ENCODE measurements at regions of chr20 and their contacts with region 1.

Region 1: DNA sequence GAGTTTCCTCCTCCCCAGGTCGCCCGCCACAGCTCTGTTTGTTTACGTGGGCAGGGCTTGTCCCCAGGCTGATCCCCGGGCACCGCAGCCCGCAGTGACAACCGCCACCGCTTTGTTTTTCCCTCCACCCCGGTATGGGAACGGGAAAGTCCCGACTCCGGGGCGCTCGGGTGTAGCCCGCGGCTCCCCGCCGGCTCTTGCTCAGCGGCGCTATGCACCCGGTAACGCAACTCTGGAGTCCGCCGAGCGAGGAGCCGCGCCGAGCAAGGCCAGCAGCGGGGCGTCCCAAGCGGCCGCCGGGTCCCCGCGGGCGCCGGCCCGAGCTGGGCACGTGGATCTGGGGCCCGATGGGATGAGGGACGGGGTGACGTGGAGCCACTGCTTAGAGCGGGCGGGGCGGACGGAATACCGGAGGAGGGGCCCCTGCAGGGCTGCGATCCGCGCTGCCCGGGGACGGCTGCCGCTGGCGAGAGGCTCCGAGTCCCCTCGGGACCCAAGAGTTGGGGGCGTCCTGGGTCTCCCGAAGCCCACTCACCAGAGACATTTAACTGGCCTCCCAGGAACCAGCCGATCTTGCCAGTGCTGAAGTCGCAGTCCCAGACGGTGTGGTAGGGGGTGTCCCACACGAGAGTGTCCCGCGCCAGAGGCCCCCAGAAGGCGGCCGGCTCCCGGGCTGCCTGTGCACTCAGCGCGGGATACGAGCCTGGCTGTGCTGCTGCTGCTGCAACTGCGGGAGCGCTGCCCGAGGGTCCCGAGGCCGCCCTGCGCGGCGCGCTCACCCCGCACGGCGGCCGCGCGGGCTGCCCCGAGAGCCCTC is 497 bp downstream of the ACSS1 start:
- DNase-seq: peak; percentile 59 to 86 (median 78)
- ATAC-seq: peak; percentile 56 to 59
- H3K4me3 Mint-ChIP-seq: peak overlapping the region; percentile 82 to 93 (median 87)
- H3K27ac Mint-ChIP-seq: peak overlapping the region; percentile 86 to 96 (median 92)
- H3K4me1 Mint-ChIP-seq: peaks cover 27 to 58% (median 53%) of the 10 kb centered on the region in 4 donors
- H3K27me3 Mint-ChIP-seq: no peaks in the 10 kb centered on the region

Region 2: GRCh38 chr20:24934101-24934661 is 123.3 kb before region 1 on chr20:
- POLR2A ChIA-PET with region 1: no interaction called
- DNase-seq: no peak
- ATAC-seq: no peak
- H3K4me3 Mint-ChIP-seq: no peak overlapping the region
- H3K27ac Mint-ChIP-seq: no peak overlapping the region
- H3K4me1 Mint-ChIP-seq: peaks cover 11 to 33% (median 27%) of the 10 kb centered on the region in 4 donors
- H3K27me3 Mint-ChIP-seq: no peaks in the 10 kb centered on the region

Region 3: DNA sequence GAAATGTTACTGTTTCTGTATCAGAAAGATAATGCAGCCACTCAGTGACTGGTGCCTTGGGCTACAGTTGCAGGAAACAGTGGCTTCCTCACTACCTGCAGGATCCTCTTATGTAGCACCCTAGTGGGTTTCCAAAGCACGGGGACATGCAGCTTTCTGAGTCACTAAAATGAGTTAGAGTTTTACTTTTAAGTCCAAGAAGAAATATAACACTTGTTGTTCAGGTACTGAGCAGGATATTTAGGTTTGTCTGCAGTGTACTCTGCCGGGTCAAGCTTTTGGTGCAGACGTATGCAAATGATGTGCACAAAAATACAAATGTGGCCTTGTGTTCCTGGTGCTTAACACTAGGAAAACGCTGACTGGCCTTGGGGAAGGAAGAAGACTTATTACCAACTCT is 21.5 kb before region 1 on chr20:
- POLR2A ChIA-PET with region 1: interaction called, 23 read pairs
- DNase-seq: peak in 4 of 10 donors; percentile 18 to 63 (median 34)
- ATAC-seq: peak; percentile 62 to 67
- H3K4me3 Mint-ChIP-seq: peak overlapping the region; percentile 40 to 80 (median 68)
- H3K27ac Mint-ChIP-seq: peak overlapping the region; percentile 75 to 96 (median 93)
- H3K4me1 Mint-ChIP-seq: peaks cover 29 to 64% (median 57%) of the 10 kb centered on the region in 4 donors
- H3K27me3 Mint-ChIP-seq: no peaks in the 10 kb centered on the region

Region 4: GRCh38 chr20:25090492-25091429 is 33.3 kb after region 1 on chr20:
- POLR2A ChIA-PET with region 1: interaction called, 28 read pairs
- DNase-seq: peak; percentile 55 to 89 (median 78)
- ATAC-seq: peak; percentile 99
- H3K4me3 Mint-ChIP-seq: peak overlapping the region in 9 of 10 donors; percentile 21 to 76 (median 72)
- H3K27ac Mint-ChIP-seq: peak overlapping the region; percentile 39 to 95 (median 86)
- H3K4me1 Mint-ChIP-seq: peaks cover 21 to 48% (median 32%) of the 10 kb centered on the region in 4 donors
- H3K27me3 Mint-ChIP-seq: peaks cover under 1 to 12% (median 7%) of the 10 kb centered on the region in 5 donors

Region 5: DNA sequence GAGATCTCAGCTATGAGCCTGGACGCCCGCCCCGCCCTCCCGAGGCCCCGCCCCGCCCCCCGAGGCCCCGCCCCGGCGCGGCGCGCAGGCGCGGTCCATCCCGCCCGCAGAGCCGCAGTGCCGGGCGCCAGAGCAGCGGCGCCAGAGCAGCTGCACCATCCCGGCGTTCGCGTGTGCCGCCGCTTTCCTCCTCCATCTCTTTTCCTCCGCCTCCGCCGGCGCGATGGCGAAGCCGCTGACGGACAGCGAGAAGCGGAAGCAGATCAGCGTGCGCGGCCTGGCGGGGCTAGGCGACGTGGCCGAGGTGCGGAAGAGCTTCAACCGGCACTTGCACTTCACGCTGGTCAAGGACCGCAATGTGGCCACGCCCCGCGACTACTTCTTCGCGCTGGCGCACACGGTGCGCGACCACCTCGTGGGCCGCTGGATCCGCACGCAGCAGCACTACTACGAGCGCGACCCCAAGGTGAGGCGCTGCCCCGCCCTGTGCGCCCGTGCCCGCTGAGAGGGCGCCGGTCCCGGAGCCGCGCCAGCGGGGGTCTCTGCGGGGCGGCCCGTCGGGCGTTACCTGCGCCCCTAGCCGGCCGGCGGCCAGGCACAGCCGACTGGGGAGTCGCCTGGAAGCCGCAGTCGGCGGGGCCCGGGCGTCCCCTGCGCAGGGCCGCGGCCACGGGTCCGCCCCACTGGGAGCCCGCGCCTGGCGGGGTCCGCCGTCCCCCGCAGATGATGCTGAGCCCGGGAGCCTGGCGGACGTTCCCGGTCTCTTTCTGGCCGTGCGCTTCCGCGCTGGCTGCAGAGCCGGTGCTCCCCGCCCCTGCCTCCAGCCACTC is 190.7 kb after region 1 on chr20 and contains the start of gene PYGB:
- POLR2A ChIA-PET with region 1: interaction called, 19 read pairs
- DNase-seq: peak; percentile 45 to 82 (median 74)
- ATAC-seq: peak; percentile 80 to 81
- H3K4me3 Mint-ChIP-seq: peak within 1 kb of the TSS; percentile 87 to 100 (median 96)
- H3K27ac Mint-ChIP-seq: peak within 1 kb of the TSS; percentile 4 to 97 (median 92)
- H3K4me1 Mint-ChIP-seq: peaks cover 24 to 58% (median 47%) of the 10 kb centered on the region in 4 donors
- H3K27me3 Mint-ChIP-seq: peaks cover 0 to 4% (median 0%) of the 10 kb centered on the region in 5 donors
- polyA plus RNA-seq, gene PYGB: 39.9 to 107 (median 71.3) TPM

Measured in naive thymus-derived CD8-positive, alpha-beta T cell (primary cell).